ENCODE measurements at regions of chr15 and their contacts with region 1.

Region 1: GRCh38 chr15:72231066-72231846 is at the start of gene PKM:
- DNase-seq: peak; percentile 92
- ATAC-seq: peak; percentile 38
- H3K4me3 Mint-ChIP-seq: peak within 1 kb of the TSS; percentile 99
- H3K27ac Mint-ChIP-seq: peak within 1 kb of the TSS; percentile 98
- H3K4me1 Mint-ChIP-seq: peaks cover 41% of the 10 kb centered on the region
- H3K27me3 Mint-ChIP-seq: no peaks in the 10 kb centered on the region
- CTCF ChIP-seq: no peak
- total RNA-seq, gene PKM: 1,253 and 1,275 TPM in 2 replicates

Region 2: GRCh38 chr15:72199711-72200212 is 31.5 kb before region 1 on chr15:
- CTCF ChIA-PET with region 1: interaction called, 40 read pairs
- POLR2A ChIA-PET with region 1: interaction called, 52 read pairs
- intact Hi-C with region 1: loop called (anchors 1 kb)
- DNase-seq: peak; percentile 60
- ATAC-seq: peak; percentile 72
- H3K4me3 Mint-ChIP-seq: no peak overlapping the region
- H3K27ac Mint-ChIP-seq: no peak overlapping the region
- H3K4me1 Mint-ChIP-seq: peaks cover 27% of the 10 kb centered on the region
- H3K27me3 Mint-ChIP-seq: peaks cover 18% of the 10 kb centered on the region
- CTCF ChIP-seq: peak; percentile 56

Region 3: GRCh38 chr15:72272213-72273002 is 41.2 kb after region 1 on chr15 and contains the start of gene PARP6:
- CTCF ChIA-PET with region 1: interaction called, 16 read pairs
- POLR2A ChIA-PET with region 1: interaction called, 113 read pairs
- intact Hi-C with region 1: loop called (anchors 1 kb)
- DNase-seq: peak; percentile 95
- ATAC-seq: peak; percentile 96
- H3K4me3 Mint-ChIP-seq: peak within 1 kb of the TSS; percentile 87
- H3K27ac Mint-ChIP-seq: peak within 1 kb of the TSS; percentile 86
- H3K4me1 Mint-ChIP-seq: peaks cover 36% of the 10 kb centered on the region
- H3K27me3 Mint-ChIP-seq: no peaks in the 10 kb centered on the region
- CTCF ChIP-seq: no peak
- total RNA-seq, gene PARP6: 70.7 and 81.4 TPM in 2 replicates

Region 4: DNA sequence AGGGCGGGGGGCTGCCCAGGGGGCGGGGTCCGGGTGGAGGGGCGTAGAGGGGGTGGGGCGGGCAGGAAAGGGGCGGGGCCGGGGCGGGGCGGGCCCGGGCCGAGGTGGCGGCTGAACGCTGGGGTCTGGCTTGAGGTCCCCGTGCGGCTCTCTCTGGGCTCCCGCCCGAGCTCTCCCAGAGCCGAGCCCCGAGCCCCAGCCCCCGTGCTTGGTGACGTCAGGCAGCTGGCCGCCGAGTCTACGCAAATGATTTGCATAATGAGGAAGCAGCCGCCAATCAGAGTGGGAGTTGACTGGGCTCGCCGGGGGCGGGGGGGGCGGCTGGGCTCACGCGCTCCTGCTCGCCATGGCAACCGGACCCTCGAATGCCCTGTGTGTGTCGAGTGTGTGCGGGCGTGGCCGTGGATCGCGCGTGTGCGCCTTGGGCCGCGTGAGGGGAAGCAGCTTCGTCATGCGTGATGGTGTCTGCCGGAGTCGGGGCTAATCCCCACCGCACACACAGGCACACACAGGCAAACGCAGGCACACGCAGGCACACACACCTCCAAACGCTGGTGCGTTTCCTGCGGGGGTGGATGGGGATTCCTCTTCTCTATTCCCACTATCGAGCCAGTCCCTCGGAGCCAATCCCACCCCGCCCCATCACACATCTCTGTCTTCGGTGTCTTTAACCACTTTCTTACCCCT is 88.9 kb after region 1 on chr15 and contains the start of gene CELF6:
- CTCF ChIA-PET with region 1: no interaction called
- POLR2A ChIA-PET with region 1: interaction called, 7 read pairs
- intact Hi-C with region 1: loop called (anchors 1 kb)
- DNase-seq: peak; percentile 77
- ATAC-seq: peak; percentile 81
- H3K4me3 Mint-ChIP-seq: peak within 1 kb of the TSS; percentile 86
- H3K27ac Mint-ChIP-seq: peak within 1 kb of the TSS; percentile 47
- H3K4me1 Mint-ChIP-seq: peaks cover 18% of the 10 kb centered on the region
- H3K27me3 Mint-ChIP-seq: no peaks in the 10 kb centered on the region
- CTCF ChIP-seq: no peak
- total RNA-seq, gene CELF6: 2.0 and 2.2 TPM in 2 replicates

Region 5: GRCh38 chr15:72685925-72686794 is 454.9 kb after region 1 on chr15 and contains the starts of genes BBS4 and HIGD2B:
- CTCF ChIA-PET with region 1: no interaction called
- POLR2A ChIA-PET with region 1: interaction called, 7 read pairs
- intact Hi-C with region 1: loop called (anchors 1 kb)
- DNase-seq: peak; percentile 83
- ATAC-seq: peak; percentile 93
- H3K4me3 Mint-ChIP-seq: peak within 1 kb of the TSS; percentile 97
- H3K27ac Mint-ChIP-seq: peak within 1 kb of the TSS; percentile 93
- H3K4me1 Mint-ChIP-seq: peaks cover 20% of the 10 kb centered on the region
- H3K27me3 Mint-ChIP-seq: no peaks in the 10 kb centered on the region
- CTCF ChIP-seq: no peak
- total RNA-seq, gene BBS4: 19.4 and 21.4 TPM in 2 replicates
- total RNA-seq, gene HIGD2B: 0.20 and 0.55 TPM in 2 replicates

Measured in activated B cell treated with CpG ODN at 0.5 μM for 24 hours (primary cell).